Activated B cell treated with CpG ODN at 0.5 μM for 24 hours (primary cell): ENCODE measurements at regions of chr16 and their contacts with region 1.

Region 1: GRCh38 chr16:8567750-8568617 is 22.3 kb downstream of the TMEM114 start:
- DNase-seq: peak; percentile 64
- ATAC-seq: peak; percentile 94
- H3K4me3 Mint-ChIP-seq: no peak overlapping the region
- H3K27ac Mint-ChIP-seq: no peak overlapping the region
- H3K4me1 Mint-ChIP-seq: peaks cover 3% of the 10 kb centered on the region
- H3K27me3 Mint-ChIP-seq: peaks cover 8% of the 10 kb centered on the region
- CTCF ChIP-seq: peak; percentile 88

Region 2: DNA sequence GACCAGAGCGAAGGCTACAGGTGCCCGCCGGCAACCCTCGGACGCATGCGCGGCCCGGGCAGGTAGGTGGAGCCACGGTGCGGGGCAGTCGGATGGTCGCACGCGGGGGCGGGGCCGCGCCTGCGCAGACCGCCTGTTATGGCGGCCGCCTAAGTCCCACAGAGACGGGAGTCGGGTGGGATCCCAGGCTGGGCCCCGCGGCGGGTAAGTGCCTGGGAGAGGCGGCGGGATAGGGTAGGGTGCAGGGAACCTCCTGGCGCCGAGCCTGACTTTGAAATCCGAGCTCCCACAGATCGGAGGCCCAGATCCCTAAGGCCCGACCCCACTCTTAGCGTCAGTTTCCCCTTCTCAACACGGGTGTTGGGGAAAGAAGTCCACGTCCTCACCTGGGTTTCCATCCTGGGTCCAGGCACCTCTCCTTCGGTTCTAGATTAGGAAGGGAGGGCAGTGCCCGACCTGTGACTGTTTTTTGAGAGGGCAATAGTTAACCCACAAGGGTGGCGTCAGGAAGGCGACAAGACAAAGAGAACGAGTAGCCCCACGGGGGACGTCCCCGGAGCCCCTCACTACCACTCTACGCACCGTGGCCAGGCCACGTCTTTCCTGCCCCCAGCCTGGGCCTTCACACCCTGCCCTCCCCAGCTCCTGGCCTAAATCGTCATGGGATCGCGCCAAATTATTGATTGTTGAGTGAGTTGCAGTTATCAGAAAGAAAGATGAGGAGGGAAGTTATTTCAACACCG is 53.8 kb after region 1 on chr16 and contains the start of gene METTL22:
- CTCF ChIA-PET with region 1: no interaction called
- POLR2A ChIA-PET with region 1: no interaction called
- intact Hi-C with region 1: loop called (anchors 5 kb)
- DNase-seq: peak; percentile 96
- ATAC-seq: peak; percentile 99
- H3K4me3 Mint-ChIP-seq: peak within 1 kb of the TSS; percentile 95
- H3K27ac Mint-ChIP-seq: peak within 1 kb of the TSS; percentile 79
- H3K4me1 Mint-ChIP-seq: peaks cover 13% of the 10 kb centered on the region
- H3K27me3 Mint-ChIP-seq: no peaks in the 10 kb centered on the region
- CTCF ChIP-seq: no peak
- total RNA-seq, gene METTL22: 36.4 and 49.6 TPM in 2 replicates

Region 3: DNA sequence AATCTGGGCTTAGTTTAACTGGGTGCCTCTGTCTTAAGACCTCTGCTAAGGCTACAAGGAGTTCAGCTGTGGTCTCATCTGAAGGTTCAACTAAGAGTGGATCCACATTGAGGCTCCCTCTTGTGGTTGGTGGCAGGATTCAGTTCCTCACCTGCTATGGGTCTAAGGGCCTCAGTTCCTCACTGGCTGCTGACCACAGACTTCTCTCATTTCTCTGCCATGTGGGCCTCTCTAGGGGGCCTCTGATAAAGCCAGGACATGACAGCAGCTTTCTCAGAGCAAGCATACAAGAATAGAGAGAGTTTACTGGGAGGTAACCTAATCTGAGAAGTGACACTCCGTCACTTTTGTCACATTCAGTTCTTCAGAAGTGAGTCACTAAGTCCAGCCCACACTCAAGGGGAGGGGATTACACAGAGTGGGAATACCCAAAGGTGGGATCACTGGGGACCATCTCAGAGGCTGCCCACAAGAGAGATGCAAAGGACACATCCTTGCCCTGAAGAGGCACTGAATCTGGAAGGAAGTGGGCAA is 87.3 kb after region 1 on chr16:
- CTCF ChIA-PET with region 1: no interaction called
- POLR2A ChIA-PET with region 1: no interaction called
- intact Hi-C with region 1: loop called (anchors 5 kb)
- DNase-seq: no peak
- ATAC-seq: no peak
- H3K4me3 Mint-ChIP-seq: no peak overlapping the region
- H3K27ac Mint-ChIP-seq: no peak overlapping the region
- H3K4me1 Mint-ChIP-seq: peaks cover 5% of the 10 kb centered on the region
- H3K27me3 Mint-ChIP-seq: no peaks in the 10 kb centered on the region
- CTCF ChIP-seq: no peak

Region 4: GRCh38 chr16:8878521-8878911 is 310.5 kb after region 1 on chr16:
- CTCF ChIA-PET with region 1: interaction called, 11 read pairs
- POLR2A ChIA-PET with region 1: interaction called, 3 read pairs
- intact Hi-C with region 1: loop called (anchors 1 kb)
- DNase-seq: no peak
- ATAC-seq: no peak
- H3K4me3 Mint-ChIP-seq: no peak overlapping the region
- H3K27ac Mint-ChIP-seq: no peak overlapping the region
- H3K4me1 Mint-ChIP-seq: peaks cover 6% of the 10 kb centered on the region
- H3K27me3 Mint-ChIP-seq: no peaks in the 10 kb centered on the region
- CTCF ChIP-seq: no peak

Region 5: GRCh38 chr16:10181196-10182162 is 1613.5 kb after region 1 on chr16:
- CTCF ChIA-PET with region 1: no interaction called
- POLR2A ChIA-PET with region 1: no interaction called
- intact Hi-C with region 1: loop called (anchors 1 kb)
- DNase-seq: peak; percentile 59
- ATAC-seq: peak; percentile 46
- H3K4me3 Mint-ChIP-seq: peak overlapping the region; percentile 78
- H3K27ac Mint-ChIP-seq: no peak overlapping the region
- H3K4me1 Mint-ChIP-seq: peaks cover 24% of the 10 kb centered on the region
- H3K27me3 Mint-ChIP-seq: peaks cover 57% of the 10 kb centered on the region
- CTCF ChIP-seq: peak; percentile 54

Region 6: DNA sequence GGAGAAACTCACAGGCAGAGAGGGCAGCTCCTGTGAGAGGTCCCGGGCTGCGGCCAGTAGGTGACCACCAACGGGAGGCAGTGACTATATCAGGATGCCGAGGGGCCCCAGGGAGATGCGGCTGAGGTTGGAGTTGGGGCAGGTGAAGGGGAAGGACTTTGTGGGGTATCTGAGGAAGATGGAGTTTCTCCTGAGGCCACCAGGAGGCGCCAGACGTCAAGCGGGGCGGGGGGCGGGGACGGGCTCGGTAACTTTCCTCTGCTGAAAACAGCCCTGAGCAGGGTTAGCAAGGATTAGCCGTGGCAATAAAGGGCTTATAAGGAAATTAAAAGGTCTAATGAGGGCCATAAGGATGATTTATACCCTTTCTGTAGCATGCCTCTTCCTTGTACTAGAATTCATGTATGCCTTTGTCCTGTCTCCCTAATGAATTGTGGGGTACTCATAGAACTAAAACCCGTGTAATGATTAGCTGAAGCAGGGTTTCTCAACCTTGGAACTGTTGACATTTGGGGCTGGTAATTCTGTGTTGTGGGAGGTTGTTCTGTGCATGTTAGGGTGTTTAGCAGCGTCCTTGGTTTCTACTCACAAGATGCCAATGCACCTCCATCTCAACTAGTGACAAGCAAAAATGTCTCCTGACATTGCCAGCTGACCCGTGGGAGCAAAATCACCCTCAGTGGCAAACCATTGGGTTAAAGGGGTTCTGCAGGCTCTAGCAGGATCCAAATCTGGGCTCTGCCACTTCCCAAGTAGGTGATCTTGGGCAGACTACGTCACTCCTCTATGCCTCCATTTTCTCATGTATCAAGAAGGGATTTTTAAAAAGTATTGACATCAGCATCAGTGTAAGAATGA is 1689.0 kb after region 1 on chr16:
- CTCF ChIA-PET with region 1: no interaction called
- POLR2A ChIA-PET with region 1: no interaction called
- intact Hi-C with region 1: loop called (anchors 2 kb)
- DNase-seq: peak; percentile 56
- ATAC-seq: peak; percentile 83
- H3K4me3 Mint-ChIP-seq: peak overlapping the region; percentile 71
- H3K27ac Mint-ChIP-seq: peak overlapping the region; percentile 47
- H3K4me1 Mint-ChIP-seq: peaks cover 42% of the 10 kb centered on the region
- H3K27me3 Mint-ChIP-seq: no peaks in the 10 kb centered on the region
- CTCF ChIP-seq: no peak